Activated CD8-positive, alpha-beta T cell treated with anti-CD3 and anti-CD28 coated beads for 36 hours (primary cell): ENCODE measurements at regions of chr6 and their contacts with region 1.

Region 1: GRCh38 chr6:138517635-138518034 is 18.3 kb upstream of the NHSL1 start:
- DNase-seq: peak; percentile 68
- ATAC-seq: peak; percentile 96
- H3K4me3 Mint-ChIP-seq: no peak overlapping the region
- H3K27ac Mint-ChIP-seq: no peak overlapping the region
- H3K4me1 Mint-ChIP-seq: peaks cover 6% of the 10 kb centered on the region
- H3K27me3 Mint-ChIP-seq: peaks cover 7% of the 10 kb centered on the region
- CTCF ChIP-seq: peak; percentile 86

Region 2: GRCh38 chr6:138499303-138500018 is 18.2 kb before region 1 on chr6 and contains the start of gene NHSL1:
- CTCF ChIA-PET with region 1: interaction called, 10 read pairs
- POLR2A ChIA-PET with region 1: interaction called, 3 read pairs
- intact Hi-C with region 1: no loop called
- DNase-seq: no peak
- ATAC-seq: peak; percentile 27
- H3K4me3 Mint-ChIP-seq: no peak within 1 kb of the TSS
- H3K27ac Mint-ChIP-seq: no peak within 1 kb of the TSS
- H3K4me1 Mint-ChIP-seq: peaks cover 4% of the 10 kb centered on the region
- H3K27me3 Mint-ChIP-seq: peaks cover 7% of the 10 kb centered on the region
- CTCF ChIP-seq: no peak
- total RNA-seq, gene NHSL1: 0.18 to 0.49 TPM

Region 3: DNA sequence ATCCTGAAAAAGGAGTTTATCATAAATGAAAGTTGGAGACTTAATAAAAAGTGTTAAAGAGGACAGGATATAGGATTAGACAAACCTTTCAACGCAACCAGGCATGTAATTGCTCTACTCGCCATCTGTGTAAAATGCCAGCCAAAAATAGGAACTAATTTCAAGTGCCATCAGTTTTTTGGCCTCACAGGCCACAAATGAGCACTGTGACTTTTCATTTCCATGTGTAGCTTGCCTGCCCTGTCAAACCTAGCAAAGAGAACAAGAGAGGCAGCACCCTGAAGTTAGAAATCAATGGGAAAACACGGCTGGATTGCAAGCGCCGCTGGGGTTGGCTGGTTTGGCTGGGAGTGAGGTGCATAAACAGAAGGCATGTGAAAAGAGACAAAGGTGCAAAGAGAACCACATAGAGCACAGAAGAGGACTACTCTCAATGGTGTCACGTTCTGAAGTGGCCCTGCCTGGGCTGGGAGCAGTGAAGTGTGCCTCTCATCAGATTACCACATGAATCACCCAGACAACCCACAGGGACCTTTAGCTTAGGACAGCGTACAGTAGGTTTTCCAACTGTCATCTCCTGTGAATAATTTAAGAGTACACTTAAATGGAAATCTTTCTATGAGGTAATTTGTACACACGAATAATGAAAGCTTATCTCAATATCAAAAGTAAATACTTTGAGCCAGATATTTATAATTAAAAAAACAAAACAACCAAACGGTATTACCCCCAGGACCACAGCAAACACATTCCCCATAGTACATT is 59.7 kb after region 1 on chr6:
- CTCF ChIA-PET with region 1: no interaction called
- POLR2A ChIA-PET with region 1: no interaction called
- intact Hi-C with region 1: no loop called
- DNase-seq: peak; percentile 28
- ATAC-seq: peak; percentile 55
- H3K4me3 Mint-ChIP-seq: no peak overlapping the region
- H3K27ac Mint-ChIP-seq: no peak overlapping the region
- H3K4me1 Mint-ChIP-seq: peaks cover 5% of the 10 kb centered on the region
- H3K27me3 Mint-ChIP-seq: no peaks in the 10 kb centered on the region
- CTCF ChIP-seq: no peak